Activated CD8-positive, alpha-beta T cell treated with anti-CD3 and anti-CD28 coated beads, Interleukin-2, amount 10 ng/mL, durations not matched to agents 7 days and 5 days (primary cell): ENCODE measurements at regions of chr5 and their contacts with region 1.

Region 1: DNA sequence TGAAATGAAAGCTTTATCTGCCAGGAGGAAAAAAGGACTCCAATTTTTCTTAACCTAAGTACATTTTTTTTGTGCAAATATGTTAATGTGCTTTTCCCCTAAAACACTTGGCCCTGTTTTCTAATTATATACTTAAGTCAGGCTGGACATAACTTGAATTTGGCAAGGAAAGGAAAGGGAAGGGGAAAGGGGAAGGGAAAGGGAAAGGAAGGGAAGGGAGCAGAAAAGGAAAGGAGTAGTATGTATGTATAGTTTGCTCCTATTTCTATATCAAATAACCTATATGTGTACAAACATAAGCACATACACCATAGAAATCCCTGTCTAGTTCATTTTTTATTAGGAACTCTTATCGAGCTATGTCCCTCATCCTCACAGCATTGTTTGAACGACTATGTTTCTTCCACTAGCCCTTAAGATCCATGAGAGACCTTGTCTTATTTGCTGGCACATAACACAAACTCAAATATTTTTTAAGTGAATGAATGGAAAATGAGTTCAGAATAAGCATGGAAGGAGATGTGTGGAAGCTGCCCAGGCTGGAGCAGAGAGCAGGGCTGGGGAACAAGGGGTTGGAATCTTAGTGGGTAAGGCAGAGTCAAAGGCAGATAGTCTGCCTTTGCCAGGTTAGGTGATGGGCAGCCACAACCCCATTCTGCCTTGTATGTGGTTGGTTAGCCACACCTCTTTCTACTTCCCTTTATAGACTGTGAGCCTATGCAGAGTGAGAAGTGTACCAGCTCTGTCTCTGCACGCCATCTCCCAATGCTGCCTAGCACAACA is 70.0 kb downstream of the KLHL3 start:
- DNase-seq: peak; percentile 76
- ATAC-seq: peak; percentile 100
- H3K4me3 Mint-ChIP-seq: peak overlapping the region; percentile 10
- H3K27ac Mint-ChIP-seq: peak overlapping the region; percentile 83
- H3K4me1 Mint-ChIP-seq: peaks cover 37% of the 10 kb centered on the region
- H3K27me3 Mint-ChIP-seq: no peaks in the 10 kb centered on the region

Region 2: GRCh38 chr5:137735555-137736284 is 69.9 kb after region 1 on chr5 and contains the start of gene KLHL3:
- CTCF ChIA-PET with region 1: interaction called, 569 read pairs
- POLR2A ChIA-PET with region 1: interaction called, 7 read pairs
- DNase-seq: peak; percentile 54
- ATAC-seq: peak; percentile 48
- H3K4me3 Mint-ChIP-seq: no peak within 1 kb of the TSS
- H3K27ac Mint-ChIP-seq: no peak within 1 kb of the TSS
- H3K4me1 Mint-ChIP-seq: peaks cover 26% of the 10 kb centered on the region
- H3K27me3 Mint-ChIP-seq: no peaks in the 10 kb centered on the region
- total RNA-seq, gene KLHL3: 13.7 to 15.2 TPM